ENCODE measurements at regions of chr13 and their contacts with region 1.

Region 1: GRCh38 chr13:36887758-36888521 is 32.1 kb downstream of the SMAD9 start:
- DNase-seq: peak; percentile 21
- ATAC-seq: peak; percentile 83
- H3K4me3 ChIP-seq: no peak overlapping the region
- H3K27ac ChIP-seq: no peak overlapping the region
- H3K4me1 ChIP-seq: no peaks in the 10 kb centered on the region
- H3K27me3 ChIP-seq: no peaks in the 10 kb centered on the region; a peak in 1 of 4 replicates
- CTCF ChIP-seq: no peak
- EP300 ChIP-seq: no peak
- POLR2A ChIP-seq: no peak
- RAD21 ChIP-seq: no peak

Region 2: GRCh38 chr13:38617959-38618730 is 1730.2 kb after region 1 on chr13:
- CTCF ChIA-PET with region 1: no interaction called
- POLR2A ChIA-PET with region 1: interaction called, 10 read pairs
- RAD21 ChIA-PET with region 1: no interaction called
- SMC1A ChIA-PET with region 1: no interaction called
- in situ Hi-C with region 1: no loop called
- intact Hi-C with region 1: no loop called
- DNase-seq: no peak
- ATAC-seq: no peak
- H3K4me3 ChIP-seq: no peak overlapping the region
- H3K27ac ChIP-seq: no peak overlapping the region
- H3K4me1 ChIP-seq: no peaks in the 10 kb centered on the region
- H3K27me3 ChIP-seq: no peaks in the 10 kb centered on the region
- CTCF ChIP-seq: no peak
- EP300 ChIP-seq: no peak
- POLR2A ChIP-seq: no peak
- RAD21 ChIP-seq: no peak